Activated CD4-positive, alpha-beta T cell treated with anti-CD3 and anti-CD28 coated beads for 36 hours (primary cell): ENCODE measurements at regions of chr1 and their contacts with region 1.

Region 1: GRCh38 chr1:218330043-218330623 is 15.0 kb upstream of the TGFB2 start:
- DNase-seq: no peak
- ATAC-seq: no peak
- H3K4me3 Mint-ChIP-seq: no peak overlapping the region
- H3K27ac Mint-ChIP-seq: no peak overlapping the region
- H3K4me1 Mint-ChIP-seq: no peaks in the 10 kb centered on the region
- H3K27me3 Mint-ChIP-seq: no peaks in the 10 kb centered on the region

Region 2: GRCh38 chr1:218521375-218522169 is 191.4 kb after region 1 on chr1:
- CTCF ChIA-PET with region 1: interaction called, 7 read pairs
- POLR2A ChIA-PET with region 1: no interaction called
- intact Hi-C with region 1: loop called (anchors 1 kb)
- DNase-seq: peak; percentile 64
- ATAC-seq: no peak
- H3K4me3 Mint-ChIP-seq: no peak overlapping the region
- H3K27ac Mint-ChIP-seq: no peak overlapping the region
- H3K4me1 Mint-ChIP-seq: no peaks in the 10 kb centered on the region
- H3K27me3 Mint-ChIP-seq: peaks cover 16% of the 10 kb centered on the region

Region 3: GRCh38 chr1:218983887-218984286 is 653.8 kb after region 1 on chr1:
- CTCF ChIA-PET with region 1: no interaction called
- POLR2A ChIA-PET with region 1: no interaction called
- intact Hi-C with region 1: no loop called
- DNase-seq: no peak
- ATAC-seq: no peak
- H3K4me3 Mint-ChIP-seq: no peak overlapping the region
- H3K27ac Mint-ChIP-seq: no peak overlapping the region
- H3K4me1 Mint-ChIP-seq: no peaks in the 10 kb centered on the region
- H3K27me3 Mint-ChIP-seq: no peaks in the 10 kb centered on the region

Region 4: GRCh38 chr1:219385786-219386427 is 1055.8 kb after region 1 on chr1:
- CTCF ChIA-PET with region 1: no interaction called
- POLR2A ChIA-PET with region 1: no interaction called
- intact Hi-C with region 1: loop called in 1 of 2 experiments (anchors 10 kb)
- DNase-seq: peak; percentile 57
- ATAC-seq: peak; percentile 60
- H3K4me3 Mint-ChIP-seq: no peak overlapping the region
- H3K27ac Mint-ChIP-seq: no peak overlapping the region
- H3K4me1 Mint-ChIP-seq: no peaks in the 10 kb centered on the region
- H3K27me3 Mint-ChIP-seq: peaks cover 8% of the 10 kb centered on the region

Region 5: GRCh38 chr1:219416594-219417238 is 1086.6 kb after region 1 on chr1:
- CTCF ChIA-PET with region 1: no interaction called
- POLR2A ChIA-PET with region 1: no interaction called
- intact Hi-C with region 1: loop called in 1 of 2 experiments (anchors 2 kb)
- DNase-seq: peak; percentile 78
- ATAC-seq: peak; percentile 72
- H3K4me3 Mint-ChIP-seq: no peak overlapping the region
- H3K27ac Mint-ChIP-seq: no peak overlapping the region
- H3K4me1 Mint-ChIP-seq: no peaks in the 10 kb centered on the region
- H3K27me3 Mint-ChIP-seq: peaks cover 4% of the 10 kb centered on the region

Region 6: DNA sequence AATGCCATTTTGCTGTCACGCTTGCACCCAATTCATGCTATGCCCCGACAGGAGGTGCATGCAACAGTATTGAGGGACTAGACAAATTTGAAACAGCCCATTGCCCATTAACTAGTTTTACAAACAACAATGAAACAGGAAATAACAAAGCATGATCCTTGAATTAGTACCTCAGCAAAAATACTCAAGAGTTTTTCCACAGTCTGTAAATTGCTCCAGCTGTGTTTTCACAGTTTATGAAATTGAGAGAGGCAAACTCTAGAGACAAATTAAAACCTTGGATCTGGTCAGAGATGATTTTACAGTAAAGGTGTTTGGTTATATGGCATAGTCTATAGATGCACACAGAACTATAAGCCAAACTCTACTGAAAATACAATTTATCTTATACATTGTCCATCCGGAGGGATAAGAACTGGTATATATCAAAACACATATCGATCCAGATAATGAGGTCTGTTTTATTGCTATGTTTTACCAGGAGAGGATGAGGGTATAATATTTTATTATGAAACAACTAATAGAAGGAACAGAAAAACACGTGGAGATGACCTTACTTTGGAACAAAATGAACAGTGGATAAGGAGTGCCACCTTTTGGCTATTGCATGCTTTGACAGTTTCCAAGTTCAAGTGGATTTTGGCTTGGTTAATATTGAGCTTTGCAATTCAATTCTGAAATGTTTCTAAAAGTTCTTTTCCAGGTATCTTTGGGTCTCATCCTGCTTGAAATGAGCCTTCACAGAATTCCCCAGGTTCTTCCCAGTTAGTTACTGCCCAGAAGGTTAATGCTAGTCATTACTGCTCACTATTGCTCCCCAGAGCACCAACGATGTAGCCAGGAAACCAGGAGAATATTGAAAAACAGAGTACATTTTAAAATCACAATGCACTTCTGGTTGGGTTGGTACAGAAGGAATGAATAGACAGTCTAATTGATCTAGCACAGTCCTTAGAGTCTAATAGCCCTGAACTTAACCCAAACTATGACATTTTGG is 1237.1 kb after region 1 on chr1:
- CTCF ChIA-PET with region 1: no interaction called
- POLR2A ChIA-PET with region 1: no interaction called
- intact Hi-C with region 1: loop called in 1 of 2 experiments (anchors 10 kb)
- DNase-seq: no peak
- ATAC-seq: no peak
- H3K4me3 Mint-ChIP-seq: no peak overlapping the region
- H3K27ac Mint-ChIP-seq: no peak overlapping the region
- H3K4me1 Mint-ChIP-seq: no peaks in the 10 kb centered on the region
- H3K27me3 Mint-ChIP-seq: peaks cover 3% of the 10 kb centered on the region

Region 7: GRCh38 chr1:219812491-219813203 is 1482.5 kb after region 1 on chr1:
- CTCF ChIA-PET with region 1: interaction called, 3 read pairs
- POLR2A ChIA-PET with region 1: no interaction called
- intact Hi-C with region 1: loop called in 1 of 2 experiments (anchors 5 kb)
- DNase-seq: peak; percentile 14
- ATAC-seq: peak; percentile 55
- H3K4me3 Mint-ChIP-seq: no peak overlapping the region
- H3K27ac Mint-ChIP-seq: no peak overlapping the region
- H3K4me1 Mint-ChIP-seq: no peaks in the 10 kb centered on the region
- H3K27me3 Mint-ChIP-seq: peaks cover 9% of the 10 kb centered on the region